ENCODE measurements at regions of chr11 and their contacts with region 1.

Region 1: DNA sequence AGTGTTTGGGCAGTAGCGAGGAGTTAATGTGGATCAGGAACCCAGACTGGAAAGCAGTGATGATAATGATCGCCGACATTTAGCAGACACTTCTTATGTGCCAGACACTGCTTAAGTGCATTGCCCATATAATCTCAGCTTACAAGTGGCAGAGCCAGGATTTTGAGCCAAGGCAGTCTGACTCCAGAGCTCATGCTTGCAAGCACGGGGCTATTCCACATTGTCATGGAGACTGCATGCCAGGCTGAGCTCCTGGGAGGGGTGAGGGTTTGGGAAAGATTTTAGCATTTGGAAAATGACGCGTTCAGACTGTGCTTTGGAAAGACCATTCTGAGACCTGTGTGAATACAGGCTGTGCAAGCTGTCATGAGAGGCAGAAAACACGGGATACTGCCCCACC is 302.7 kb downstream of the DDX10 start:
- DNase-seq: no peak
- H3K4me3 ChIP-seq: no peak overlapping the region
- H3K27ac ChIP-seq: no peak overlapping the region
- H3K4me1 ChIP-seq: no peaks in the 10 kb centered on the region
- H3K27me3 ChIP-seq: no peaks in the 10 kb centered on the region
- CTCF ChIP-seq: no peak

Region 2: DNA sequence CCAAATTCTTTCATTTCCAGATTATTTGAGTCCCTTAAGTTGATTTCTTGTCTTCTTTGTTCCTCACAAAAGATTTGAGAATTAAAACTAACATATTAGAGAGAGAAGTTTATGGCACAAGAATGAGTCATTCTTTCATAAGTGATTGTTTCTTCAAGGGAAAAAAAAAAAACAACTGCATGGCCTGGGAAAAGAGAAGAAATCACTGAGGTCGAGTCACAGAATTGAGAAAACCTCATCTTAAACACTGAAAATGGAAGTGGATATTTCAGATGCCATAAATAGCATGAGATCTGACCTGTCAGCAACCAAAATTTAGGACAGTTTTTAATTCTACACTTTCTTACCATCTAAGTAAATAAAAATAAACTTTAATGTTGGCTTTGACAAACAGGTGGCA is 1597.2 kb before region 1 on chr11:
- CTCF ChIA-PET with region 1: no interaction called
- POLR2A ChIA-PET with region 1: no interaction called
- intact Hi-C with region 1: no loop called
- DNase-seq: peak; percentile 4
- H3K4me3 ChIP-seq: no peak overlapping the region
- H3K27ac ChIP-seq: no peak overlapping the region
- H3K4me1 ChIP-seq: no peaks in the 10 kb centered on the region
- H3K27me3 ChIP-seq: no peaks in the 10 kb centered on the region
- CTCF ChIP-seq: no peak

Region 3: GRCh38 chr11:109037856-109038780 is 70.5 kb after region 1 on chr11:
- CTCF ChIA-PET with region 1: no interaction called
- POLR2A ChIA-PET with region 1: no interaction called
- intact Hi-C with region 1: no loop called
- DNase-seq: peak; percentile 77
- H3K4me3 ChIP-seq: no peak overlapping the region
- H3K27ac ChIP-seq: no peak overlapping the region
- H3K4me1 ChIP-seq: no peaks in the 10 kb centered on the region
- H3K27me3 ChIP-seq: no peaks in the 10 kb centered on the region
- CTCF ChIP-seq: no peak

Region 4: DNA sequence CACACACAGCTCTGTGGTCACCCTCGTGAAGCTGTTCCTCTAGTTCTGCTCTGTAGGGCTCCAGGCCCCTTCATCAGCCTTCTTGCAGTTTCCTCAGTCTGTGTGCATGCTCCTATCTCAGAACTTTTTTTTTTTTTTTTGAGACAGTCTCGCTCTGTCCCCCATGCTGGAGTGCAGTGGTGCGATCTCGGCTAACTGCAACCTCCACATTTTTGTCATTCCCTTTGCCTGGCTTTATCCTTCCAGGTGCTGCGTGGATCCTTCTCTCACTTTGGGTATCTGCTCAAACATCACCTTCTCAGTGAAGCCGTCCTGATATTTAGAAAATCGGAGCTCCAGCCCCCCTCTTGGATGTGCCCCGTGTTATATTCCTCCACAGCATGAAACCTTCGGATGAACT is 1213.0 kb after region 1 on chr11:
- CTCF ChIA-PET with region 1: no interaction called
- POLR2A ChIA-PET with region 1: interaction called, 10 read pairs
- intact Hi-C with region 1: no loop called
- DNase-seq: no peak
- H3K4me3 ChIP-seq: no peak overlapping the region
- H3K27ac ChIP-seq: no peak overlapping the region
- H3K4me1 ChIP-seq: peaks cover 17% of the 10 kb centered on the region
- H3K27me3 ChIP-seq: no peaks in the 10 kb centered on the region
- CTCF ChIP-seq: no peak

Measured in A673 (cell line).